ENCODE measurements at regions of chr4 and their contacts with region 1.

Region 1: DNA sequence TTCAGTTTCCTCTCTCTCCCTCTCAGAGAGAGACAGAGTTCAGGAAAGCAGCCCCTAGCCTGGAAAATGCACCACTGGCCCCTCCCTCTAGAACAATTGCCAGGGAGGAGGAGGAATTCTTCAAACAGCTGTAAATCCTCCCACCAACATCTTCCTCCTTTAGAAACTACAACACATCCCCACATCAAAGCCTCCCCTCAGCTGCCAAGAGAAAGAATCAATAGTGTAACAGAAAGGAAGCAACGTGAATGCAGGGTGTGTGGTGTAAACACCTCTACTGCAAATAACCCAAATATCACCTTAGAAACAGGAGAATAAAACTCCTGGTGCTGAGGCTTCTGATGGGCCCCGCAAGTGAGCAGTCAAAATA is 249.9 kb upstream of the GATB start:
- DNase-seq: peak; percentile 53
- ATAC-seq: peak; percentile 64
- H3K4me3 ChIP-seq: peak overlapping the region; percentile 7; the same call in 1 of the 2 replicates
- H3K27ac ChIP-seq: peak overlapping the region; percentile 96
- H3K4me1 ChIP-seq: peaks cover 35% of the 10 kb centered on the region
- H3K27me3 ChIP-seq: no peaks in the 10 kb centered on the region
- CTCF ChIP-seq: no peak

Region 2: GRCh38 chr4:151760712-151761527 is 249.8 kb before region 1 on chr4 and contains the start of gene GATB:
- CTCF ChIA-PET with region 1: no interaction called
- POLR2A ChIA-PET with region 1: no interaction called
- intact Hi-C with region 1: loop called (anchors 2 kb)
- DNase-seq: peak; percentile 94
- ATAC-seq: peak; percentile 99
- H3K4me3 ChIP-seq: peak within 1 kb of the TSS; percentile 96
- H3K27ac ChIP-seq: peak within 1 kb of the TSS; percentile 34; the same call in 1 of the 2 replicates
- H3K4me1 ChIP-seq: peaks cover 3% of the 10 kb centered on the region; the same call in 1 of the 2 replicates
- H3K27me3 ChIP-seq: no peaks in the 10 kb centered on the region
- CTCF ChIP-seq: peak; percentile 44
- total RNA-seq, gene GATB: 20.4 and 22.7 TPM in 2 replicates

Region 3: DNA sequence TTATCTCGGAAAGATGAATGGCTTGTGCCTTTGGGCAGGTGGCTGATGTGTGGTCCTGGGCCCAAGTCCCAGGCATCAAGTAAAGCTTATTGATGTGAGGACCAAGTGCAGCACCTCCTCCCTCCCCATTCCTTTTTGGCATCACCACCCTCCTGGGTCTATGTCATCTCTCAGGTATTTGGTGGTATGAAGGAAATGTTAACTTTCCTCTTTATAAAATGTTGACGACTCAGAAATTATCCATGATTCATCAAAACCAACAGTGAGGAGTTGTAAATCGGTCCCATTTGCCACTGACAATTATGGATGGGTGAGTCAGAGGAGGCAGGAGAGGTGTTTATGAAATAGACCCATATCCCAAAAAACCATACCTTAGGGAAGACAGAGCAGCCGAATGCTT is 20.5 kb before region 1 on chr4:
- CTCF ChIA-PET with region 1: no interaction called
- POLR2A ChIA-PET with region 1: no interaction called
- intact Hi-C with region 1: loop called (anchors 1 kb)
- DNase-seq: peak; percentile 95
- ATAC-seq: peak; percentile 91
- H3K4me3 ChIP-seq: peak overlapping the region; percentile 41
- H3K27ac ChIP-seq: peak overlapping the region; percentile 97
- H3K4me1 ChIP-seq: peaks cover 23% of the 10 kb centered on the region
- H3K27me3 ChIP-seq: no peaks in the 10 kb centered on the region
- CTCF ChIP-seq: no peak

Region 4: GRCh38 chr4:152094970-152095700 is 84.4 kb after region 1 on chr4:
- CTCF ChIA-PET with region 1: no interaction called
- POLR2A ChIA-PET with region 1: no interaction called
- intact Hi-C with region 1: loop called (anchors 1 kb)
- DNase-seq: peak; percentile 56
- ATAC-seq: peak; percentile 79
- H3K4me3 ChIP-seq: no peak overlapping the region
- H3K27ac ChIP-seq: peak overlapping the region; percentile 71
- H3K4me1 ChIP-seq: peaks cover 26% of the 10 kb centered on the region
- H3K27me3 ChIP-seq: no peaks in the 10 kb centered on the region
- CTCF ChIP-seq: no peak

Region 5: DNA sequence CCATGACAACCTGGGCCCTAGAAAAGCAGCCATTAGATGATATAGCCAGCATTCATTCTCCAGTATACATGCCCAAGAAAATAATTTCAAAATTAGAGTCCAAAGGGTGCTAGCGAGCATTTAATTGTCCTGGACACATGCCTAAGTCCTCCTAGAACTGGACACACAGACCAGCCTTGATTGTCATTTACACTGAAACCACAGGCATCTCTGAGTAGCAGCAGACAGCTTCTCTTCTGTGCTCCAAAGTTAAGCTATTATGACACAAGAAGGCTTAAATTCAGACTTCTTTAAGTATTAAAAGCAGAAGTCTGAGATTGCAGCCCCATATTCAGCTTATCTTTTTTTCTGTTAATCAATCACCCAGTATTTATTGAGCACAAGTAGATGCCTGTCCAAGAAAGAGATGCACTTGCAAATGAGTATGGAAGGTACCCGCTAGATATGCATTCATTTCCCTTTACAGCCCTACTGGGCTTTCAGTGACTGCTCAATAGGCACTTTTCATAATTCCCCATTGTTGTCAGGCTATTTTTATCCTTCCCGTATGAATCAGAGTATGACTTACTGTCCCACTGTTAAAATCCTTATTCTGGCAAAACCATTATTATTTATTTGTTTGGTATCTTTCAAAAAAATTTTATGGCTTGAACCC is 151.1 kb after region 1 on chr4:
- CTCF ChIA-PET with region 1: no interaction called
- POLR2A ChIA-PET with region 1: no interaction called
- intact Hi-C with region 1: loop called (anchors 1 kb)
- DNase-seq: peak; percentile 45
- ATAC-seq: peak; percentile 91
- H3K4me3 ChIP-seq: no peak overlapping the region
- H3K27ac ChIP-seq: peak overlapping the region; percentile 38
- H3K4me1 ChIP-seq: peaks cover 13% of the 10 kb centered on the region
- H3K27me3 ChIP-seq: no peaks in the 10 kb centered on the region
- CTCF ChIP-seq: no peak